HepG2 (cell line): ENCODE measurements at regions of chr9 and their contacts with region 1.

Region 1: GRCh38 chr9:113221003-113221799 is at the starts of genes FKBP15 and SLC31A1:
- DNase-seq: peak; percentile 95
- ATAC-seq: peak; percentile 90
- H3K4me3 ChIP-seq: peak within 1 kb of the TSS; percentile 90 to 92 (median 91)
- H3K27ac ChIP-seq: peak within 1 kb of the TSS; percentile 86
- H3K4me1 ChIP-seq: peaks cover 53% of the 10 kb centered on the region
- H3K27me3 ChIP-seq: peaks cover 0 to 3% of the 10 kb centered on the region in 2 experiments; a peak in 1 of 5 replicates
- CTCF ChIP-seq: no peak
- EP300 ChIP-seq: peak in 1 of 2 experiments; percentile 32; a peak in 1 of 4 replicates
- POLR2A ChIP-seq: peak; percentile 91 to 93
- RAD21 ChIP-seq: no peak
- total RNA-seq, gene FKBP15: 11.8 and 12.3 TPM in 2 replicates
- total RNA-seq, gene SLC31A1: 45.9 and 70.0 TPM in 2 replicates

Region 2: GRCh38 chr9:113139225-113139829 is 81.9 kb before region 1 on chr9:
- CTCF ChIA-PET with region 1: no interaction called
- POLR2A ChIA-PET with region 1: interaction called, 3 read pairs
- in situ Hi-C with region 1: no loop called
- intact Hi-C with region 1: loop called (anchors 5 kb)
- DNase-seq: peak; percentile 97
- ATAC-seq: peak; percentile 91
- H3K4me3 ChIP-seq: no peak overlapping the region
- H3K27ac ChIP-seq: peak overlapping the region; percentile 66
- H3K4me1 ChIP-seq: peaks cover 48% of the 10 kb centered on the region
- H3K27me3 ChIP-seq: peaks cover 0 to 15% of the 10 kb centered on the region in 2 experiments; a peak in 3 of 5 replicates
- CTCF ChIP-seq: no peak
- EP300 ChIP-seq: peak; percentile 69 to 83; a peak in 3 of 4 replicates
- POLR2A ChIP-seq: peak in 1 of 2 experiments; percentile 15; a peak in 1 of 4 replicates
- RAD21 ChIP-seq: no peak

Region 3: GRCh38 chr9:113150670-113151611 is 70.3 kb before region 1 on chr9 and contains the start of gene SLC31A2:
- CTCF ChIA-PET with region 1: no interaction called
- POLR2A ChIA-PET with region 1: interaction called, 17 read pairs
- in situ Hi-C with region 1: no loop called
- intact Hi-C with region 1: loop called (anchors 5 kb)
- DNase-seq: peak; percentile 77
- ATAC-seq: peak; percentile 90
- H3K4me3 ChIP-seq: peak within 1 kb of the TSS; percentile 85 to 96 (median 91)
- H3K27ac ChIP-seq: peak within 1 kb of the TSS; percentile 54
- H3K4me1 ChIP-seq: peaks cover 74% of the 10 kb centered on the region
- H3K27me3 ChIP-seq: no peaks in the 10 kb centered on the region; a peak in 2 of 5 replicates
- CTCF ChIP-seq: peak; percentile 79
- EP300 ChIP-seq: no peak
- POLR2A ChIP-seq: peak; percentile 75 to 77
- RAD21 ChIP-seq: peak; percentile 73
- total RNA-seq, gene SLC31A2: 6.0 and 9.3 TPM in 2 replicates

Region 4: GRCh38 chr9:113261917-113262671 is 40.9 kb after region 1 on chr9:
- CTCF ChIA-PET with region 1: no interaction called
- POLR2A ChIA-PET with region 1: interaction called, 5 read pairs
- in situ Hi-C with region 1: no loop called
- intact Hi-C with region 1: loop called (anchors 5 kb)
- DNase-seq: peak; percentile 35
- ATAC-seq: peak; percentile 77
- H3K4me3 ChIP-seq: no peak overlapping the region
- H3K27ac ChIP-seq: peak overlapping the region; percentile 65
- H3K4me1 ChIP-seq: peaks cover 18% of the 10 kb centered on the region
- H3K27me3 ChIP-seq: no peaks in the 10 kb centered on the region
- CTCF ChIP-seq: no peak
- EP300 ChIP-seq: 0 out of 4 replicates have a peak, but pooled peaks of 1 of the 2 experiments have one; percentile 4
- POLR2A ChIP-seq: no peak
- RAD21 ChIP-seq: no peak